H1 (cell line): ENCODE measurements at regions of chr3 and their contacts with region 1.

Region 1: DNA sequence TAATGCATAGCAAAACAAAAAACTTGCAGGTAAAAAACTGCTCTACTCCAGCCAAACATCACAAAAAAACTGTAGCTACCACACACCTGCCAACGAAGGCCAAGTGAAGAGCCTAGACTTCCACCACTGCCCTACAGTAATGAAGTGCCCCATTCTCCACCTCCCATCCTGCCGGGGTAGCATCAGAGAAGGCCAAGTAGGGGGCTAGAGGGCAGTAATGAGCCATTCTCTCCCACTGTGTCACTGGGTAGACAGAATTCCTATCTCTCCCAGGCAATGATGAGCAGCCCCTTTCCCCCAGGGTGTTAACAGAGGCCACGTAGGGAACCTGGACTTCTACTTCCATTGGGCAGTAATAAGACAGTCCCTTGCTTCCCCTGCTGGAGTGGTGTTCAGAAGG is 9.5 kb downstream of the SEC22C start:
- DNase-seq: peak in 1 of 2 experiments; percentile 74
- H3K4me3 ChIP-seq: no peak overlapping the region
- H3K27ac ChIP-seq: no peak overlapping the region
- H3K4me1 ChIP-seq: no peaks in the 10 kb centered on the region
- H3K27me3 ChIP-seq: no peaks in the 10 kb centered on the region
- CTCF ChIP-seq: peak; percentile 71 to 89 (median 78)
- EP300 ChIP-seq: no peak
- POLR2A ChIP-seq: no peak
- RAD21 ChIP-seq: peak; percentile 77 to 79

Region 2: DNA sequence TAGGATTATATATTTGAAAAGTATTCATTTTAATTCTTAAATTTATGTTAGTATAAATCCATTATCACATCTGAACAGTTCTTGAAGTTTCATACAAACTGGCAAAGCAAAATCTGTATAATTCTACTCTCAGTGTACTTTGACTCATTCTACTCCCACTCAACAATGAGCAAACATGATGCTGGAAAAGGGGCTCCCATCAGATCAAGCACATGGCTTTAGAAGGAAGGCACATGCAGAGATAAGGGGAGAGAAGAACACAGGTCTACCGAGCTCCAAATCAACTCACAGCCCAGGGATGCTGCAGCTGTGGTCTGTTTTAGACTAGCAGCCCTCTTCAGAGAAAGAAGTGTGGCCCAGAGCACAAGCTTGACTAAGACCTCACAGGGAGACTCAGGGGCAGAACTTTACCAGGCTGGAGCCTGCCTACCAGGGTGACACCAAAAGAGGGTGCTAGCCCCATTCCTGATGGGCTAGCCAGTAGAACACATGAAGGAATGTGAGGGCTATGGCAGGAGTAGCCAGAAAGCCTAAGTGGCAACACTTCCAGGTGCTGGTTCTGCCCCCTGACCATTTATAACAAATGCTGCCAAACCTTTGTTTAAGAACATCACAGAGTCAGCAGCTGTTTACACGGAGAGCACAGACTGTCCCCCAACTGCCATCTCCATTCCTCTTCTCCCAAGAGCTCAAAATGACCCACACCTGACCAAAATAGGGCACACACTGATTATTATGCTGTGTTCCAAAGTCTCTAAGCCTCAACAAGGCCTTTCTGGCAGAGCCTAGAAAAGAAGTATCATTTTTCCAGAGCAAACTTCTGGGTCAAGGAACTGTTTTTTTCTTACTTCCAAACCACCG is 10.0 kb before region 1 on chr3:
- CTCF ChIA-PET with region 1: interaction called, 12 read pairs
- POLR2A ChIA-PET with region 1: no interaction called
- DNase-seq: no peak
- H3K4me3 ChIP-seq: no peak overlapping the region
- H3K27ac ChIP-seq: no peak overlapping the region
- H3K4me1 ChIP-seq: no peaks in the 10 kb centered on the region
- H3K27me3 ChIP-seq: no peaks in the 10 kb centered on the region
- CTCF ChIP-seq: no peak
- EP300 ChIP-seq: no peak
- POLR2A ChIP-seq: no peak
- RAD21 ChIP-seq: no peak; a peak in 1 of 4 replicates

Region 3: GRCh38 chr3:42946050-42946449 is 373.8 kb after region 1 on chr3:
- CTCF ChIA-PET with region 1: no interaction called
- POLR2A ChIA-PET with region 1: no interaction called
- DNase-seq: no peak
- H3K4me3 ChIP-seq: no peak overlapping the region
- H3K27ac ChIP-seq: no peak overlapping the region
- H3K4me1 ChIP-seq: no peaks in the 10 kb centered on the region
- H3K27me3 ChIP-seq: no peaks in the 10 kb centered on the region
- CTCF ChIP-seq: no peak
- EP300 ChIP-seq: no peak
- POLR2A ChIP-seq: no peak
- RAD21 ChIP-seq: no peak